ENCODE measurements at regions of chrX and their contacts with region 1.

Region 1: GRCh38 chrX:46325312-46325877 is 219.8 kb downstream of the ZNF674 start:
- DNase-seq: peak in 1 of 2 donors; percentile 73
- H3K4me3 ChIP-seq: peak overlapping the region in 1 of 2 donors; percentile 20
- H3K27ac ChIP-seq: peak overlapping the region; percentile 63 to 71
- H3K4me1 ChIP-seq: peaks cover 0 to 4% of the 10 kb centered on the region in 2 donors
- H3K27me3 ChIP-seq: no peaks in the 10 kb centered on the region
- CTCF ChIP-seq: no peak

Region 2: GRCh38 chrX:46165411-46165810 is 160.0 kb before region 1 on chrX:
- intact Hi-C with region 1: loop called (anchors 10 kb)
- DNase-seq: no peak
- H3K4me3 ChIP-seq: no peak overlapping the region
- H3K27ac ChIP-seq: peak overlapping the region; percentile 41 to 72
- H3K4me1 ChIP-seq: peaks cover 0 to 6% of the 10 kb centered on the region in 2 donors
- H3K27me3 ChIP-seq: no peaks in the 10 kb centered on the region
- CTCF ChIP-seq: no peak

Measured in ascending aorta (tissue), 2 donors.